ENCODE measurements at regions of chr13 and their contacts with region 1.

Region 1: DNA sequence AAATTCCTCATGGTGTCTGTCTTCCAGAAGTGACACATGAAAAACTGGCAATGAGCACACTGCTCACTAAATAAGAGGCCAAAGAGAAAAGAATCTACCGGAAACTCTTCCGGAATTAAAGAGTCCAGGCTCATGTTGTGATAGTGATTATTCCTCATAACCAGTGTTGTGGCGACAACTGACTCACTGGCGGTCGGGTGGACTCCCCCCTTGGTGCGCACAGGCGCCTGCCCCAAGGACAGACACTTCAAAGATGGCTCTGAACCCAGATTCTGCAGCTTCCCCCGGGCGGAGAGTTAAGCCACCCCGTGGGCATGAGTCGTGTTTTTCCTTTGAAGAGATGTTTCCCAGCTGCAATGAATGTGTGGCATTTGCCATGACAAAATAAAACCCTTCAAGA is 10.3 kb downstream of the IL17D start:
- DNase-seq: no peak
- ATAC-seq: no peak
- H3K4me3 ChIP-seq: no peak overlapping the region
- H3K27ac ChIP-seq: no peak overlapping the region
- H3K4me1 ChIP-seq: peaks cover 3% of the 10 kb centered on the region; the same call in 1 of the 2 replicates
- H3K27me3 ChIP-seq: no peaks in the 10 kb centered on the region
- CTCF ChIP-seq: no peak

Region 2: GRCh38 chr13:20182231-20182846 is 531.4 kb before region 1 on chr13:
- CTCF ChIA-PET with region 1: no interaction called
- POLR2A ChIA-PET with region 1: no interaction called
- intact Hi-C with region 1: loop called (anchors 5 kb)
- DNase-seq: peak; percentile 86
- ATAC-seq: peak; percentile 98
- H3K4me3 ChIP-seq: no peak overlapping the region
- H3K27ac ChIP-seq: no peak overlapping the region
- H3K4me1 ChIP-seq: no peaks in the 10 kb centered on the region
- H3K27me3 ChIP-seq: no peaks in the 10 kb centered on the region
- CTCF ChIP-seq: peak; percentile 91

Region 3: GRCh38 chr13:20197361-20197834 is 516.4 kb before region 1 on chr13:
- CTCF ChIA-PET with region 1: interaction called, 10 read pairs
- POLR2A ChIA-PET with region 1: no interaction called
- intact Hi-C with region 1: no loop called
- DNase-seq: peak; percentile 83
- ATAC-seq: peak; percentile 39
- H3K4me3 ChIP-seq: peak overlapping the region; percentile 50; the same call in 1 of the 2 replicates
- H3K27ac ChIP-seq: no peak overlapping the region
- H3K4me1 ChIP-seq: peaks cover 21% of the 10 kb centered on the region
- H3K27me3 ChIP-seq: no peaks in the 10 kb centered on the region
- CTCF ChIP-seq: peak; percentile 84

Region 4: GRCh38 chr13:20782116-20782708 is 68.5 kb after region 1 on chr13:
- CTCF ChIA-PET with region 1: no interaction called
- POLR2A ChIA-PET with region 1: no interaction called
- intact Hi-C with region 1: loop called (anchors 10 kb)
- DNase-seq: no peak
- ATAC-seq: no peak
- H3K4me3 ChIP-seq: no peak overlapping the region
- H3K27ac ChIP-seq: no peak overlapping the region
- H3K4me1 ChIP-seq: no peaks in the 10 kb centered on the region
- H3K27me3 ChIP-seq: no peaks in the 10 kb centered on the region
- CTCF ChIP-seq: no peak

Region 5: DNA sequence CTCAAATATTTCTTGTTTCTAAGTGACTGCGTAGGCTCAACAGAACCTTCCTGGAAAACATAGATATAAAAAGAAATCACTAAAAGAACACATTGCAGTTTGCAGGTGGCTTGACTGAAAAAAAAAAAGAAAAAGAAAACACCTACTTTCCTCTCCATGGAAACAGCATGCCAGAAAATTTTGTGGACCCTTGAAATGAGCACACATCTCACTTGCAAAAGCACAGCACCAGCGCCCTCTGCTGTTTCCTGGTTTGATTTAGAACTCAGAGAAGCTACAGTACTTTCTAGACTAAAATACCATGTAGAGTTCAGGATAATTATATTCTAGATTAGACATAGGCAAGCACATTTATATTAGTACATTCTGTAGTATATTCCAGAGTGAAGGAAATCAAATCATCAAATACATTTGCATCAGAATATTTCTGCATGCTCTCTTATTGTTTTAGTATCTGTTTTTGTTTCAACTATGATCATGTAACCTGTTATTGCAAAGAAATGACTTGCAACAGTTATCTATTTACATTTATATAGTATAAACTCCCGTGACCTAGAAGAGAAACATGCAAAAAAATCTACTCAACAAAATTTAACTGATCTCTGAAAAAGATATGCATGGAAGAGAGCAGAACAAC is 211.1 kb after region 1 on chr13:
- CTCF ChIA-PET with region 1: no interaction called
- POLR2A ChIA-PET with region 1: no interaction called
- intact Hi-C with region 1: loop called (anchors 2 kb)
- DNase-seq: peak; percentile 86
- ATAC-seq: peak; percentile 85
- H3K4me3 ChIP-seq: no peak overlapping the region
- H3K27ac ChIP-seq: no peak overlapping the region
- H3K4me1 ChIP-seq: no peaks in the 10 kb centered on the region
- H3K27me3 ChIP-seq: no peaks in the 10 kb centered on the region
- CTCF ChIP-seq: peak; percentile 97

Region 6: DNA sequence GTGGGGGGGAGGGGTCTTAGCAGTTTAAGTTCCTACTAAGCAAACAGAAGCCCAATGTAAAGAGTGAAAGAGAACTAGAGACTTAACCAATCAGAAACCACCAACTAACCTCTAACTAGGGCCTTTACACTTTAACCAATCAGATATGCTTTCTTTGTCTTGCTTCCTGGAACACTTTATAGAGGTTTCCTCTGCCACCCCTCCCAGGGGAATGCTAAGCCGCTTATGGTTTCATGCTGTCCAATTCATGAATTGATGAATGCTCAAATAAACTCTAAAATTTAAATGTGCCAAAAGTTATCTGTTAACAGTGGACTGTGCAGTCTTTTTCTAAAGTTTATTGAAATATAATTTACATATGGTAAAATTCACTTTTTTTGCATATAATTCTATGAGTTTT is 381.6 kb after region 1 on chr13:
- CTCF ChIA-PET with region 1: no interaction called
- POLR2A ChIA-PET with region 1: no interaction called
- intact Hi-C with region 1: no loop called
- DNase-seq: no peak
- ATAC-seq: no peak
- H3K4me3 ChIP-seq: no peak overlapping the region
- H3K27ac ChIP-seq: no peak overlapping the region
- H3K4me1 ChIP-seq: no peaks in the 10 kb centered on the region
- H3K27me3 ChIP-seq: no peaks in the 10 kb centered on the region
- CTCF ChIP-seq: no peak

Region 7: GRCh38 chr13:21884965-21885567 is 1171.3 kb after region 1 on chr13:
- CTCF ChIA-PET with region 1: no interaction called
- POLR2A ChIA-PET with region 1: no interaction called
- intact Hi-C with region 1: no loop called
- DNase-seq: no peak
- ATAC-seq: no peak
- H3K4me3 ChIP-seq: no peak overlapping the region
- H3K27ac ChIP-seq: no peak overlapping the region
- H3K4me1 ChIP-seq: no peaks in the 10 kb centered on the region
- H3K27me3 ChIP-seq: peaks cover 36% of the 10 kb centered on the region
- CTCF ChIP-seq: no peak